ENCODE measurements at regions of chr19 and their contacts with region 1.

Region 1: GRCh38 chr19:18112989-18113478 is 15.5 kb downstream of the MAST3 start:
- DNase-seq: no peak
- H3K4me3 ChIP-seq: no peak overlapping the region
- H3K27ac ChIP-seq: no peak overlapping the region
- H3K27me3 ChIP-seq: peaks cover 3% of the 10 kb centered on the region
- CTCF ChIP-seq: peak; percentile 96

Region 2: DNA sequence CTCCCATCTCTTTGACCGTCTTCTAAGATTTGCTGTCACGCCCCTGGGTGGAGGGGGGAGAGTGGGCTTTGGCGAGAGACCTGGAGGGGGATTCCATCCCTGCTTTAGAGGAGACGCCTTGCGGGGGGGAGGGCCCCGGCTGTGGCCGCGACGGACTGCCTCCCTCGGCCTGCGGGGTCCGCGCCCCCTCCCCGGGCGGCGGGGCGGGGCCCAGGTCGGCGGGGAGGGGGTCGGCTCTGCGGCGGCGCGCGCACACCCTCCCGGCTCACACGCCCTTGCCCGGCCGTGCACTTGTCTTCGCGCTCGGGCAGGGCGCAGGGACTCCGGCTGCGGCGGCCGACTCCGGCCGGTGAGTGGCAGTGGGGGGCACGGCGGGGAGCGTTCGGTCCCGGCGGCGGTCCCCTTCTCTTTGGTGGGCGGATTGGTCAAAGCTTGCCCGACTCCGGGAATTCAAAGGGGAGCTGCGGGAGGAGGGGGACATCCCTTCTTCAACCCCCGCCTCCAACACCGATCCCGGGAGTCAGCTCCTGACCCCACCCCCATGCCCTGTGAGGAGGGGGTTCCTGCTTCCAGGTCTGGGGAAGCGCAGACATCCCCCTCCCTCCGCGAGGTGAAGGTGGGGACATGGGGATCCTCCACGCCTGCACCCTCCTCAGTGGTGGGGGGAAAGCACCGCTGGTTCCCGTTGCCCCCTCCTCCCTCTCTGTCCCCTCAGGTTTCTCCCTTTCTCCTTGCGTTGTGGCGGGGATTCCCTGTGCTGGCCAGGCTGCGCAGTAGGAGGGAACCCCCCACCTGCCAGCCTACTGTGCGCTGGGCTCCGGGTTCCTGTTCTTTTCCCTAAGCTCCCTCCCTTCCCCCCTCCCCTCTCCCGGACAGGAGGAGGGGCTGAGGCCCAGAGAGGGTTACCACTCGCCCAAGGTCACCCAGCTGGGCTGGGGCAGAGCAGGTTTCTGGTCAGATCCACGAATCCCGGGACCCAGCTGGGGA is 160.8 kb before region 1 on chr19:
- CTCF ChIA-PET with region 1: no interaction called
- POLR2A ChIA-PET with region 1: no interaction called
- DNase-seq: no peak
- H3K4me3 ChIP-seq: no peak overlapping the region
- H3K27ac ChIP-seq: no peak overlapping the region
- H3K27me3 ChIP-seq: peaks cover 58% of the 10 kb centered on the region
- CTCF ChIP-seq: no peak

Region 3: GRCh38 chr19:18007044-18007916 is 105.8 kb before region 1 on chr19:
- CTCF ChIA-PET with region 1: interaction called, 10 read pairs
- POLR2A ChIA-PET with region 1: no interaction called
- DNase-seq: no peak
- H3K4me3 ChIP-seq: peak overlapping the region; percentile 58
- H3K27ac ChIP-seq: peak overlapping the region; percentile 21
- H3K27me3 ChIP-seq: no peaks in the 10 kb centered on the region
- CTCF ChIP-seq: peak; percentile 97

Region 4: DNA sequence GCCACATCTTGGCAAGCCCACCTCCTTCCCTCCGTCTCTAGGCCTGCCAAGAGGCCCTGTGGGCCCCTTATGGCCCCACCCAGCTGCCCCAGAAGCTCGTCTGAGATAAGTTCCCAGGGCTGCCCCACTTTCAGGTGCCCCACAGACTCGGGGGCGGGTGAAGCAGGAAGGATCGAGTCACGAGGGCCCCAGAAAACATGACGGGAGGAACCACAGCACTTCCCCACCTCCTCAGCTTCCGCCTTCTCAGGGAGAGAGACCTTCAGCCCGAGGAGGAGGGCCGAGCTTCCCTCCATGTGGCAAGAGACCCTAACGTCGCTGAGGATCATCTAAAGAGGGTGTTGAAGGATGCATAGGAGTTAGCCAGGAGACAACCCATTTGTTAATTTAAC is 21.8 kb before region 1 on chr19:
- CTCF ChIA-PET with region 1: interaction called, 8 read pairs
- POLR2A ChIA-PET with region 1: interaction called, 10 read pairs
- DNase-seq: no peak
- H3K4me3 ChIP-seq: no peak overlapping the region
- H3K27ac ChIP-seq: no peak overlapping the region
- H3K27me3 ChIP-seq: no peaks in the 10 kb centered on the region
- CTCF ChIP-seq: no peak

Region 5: DNA sequence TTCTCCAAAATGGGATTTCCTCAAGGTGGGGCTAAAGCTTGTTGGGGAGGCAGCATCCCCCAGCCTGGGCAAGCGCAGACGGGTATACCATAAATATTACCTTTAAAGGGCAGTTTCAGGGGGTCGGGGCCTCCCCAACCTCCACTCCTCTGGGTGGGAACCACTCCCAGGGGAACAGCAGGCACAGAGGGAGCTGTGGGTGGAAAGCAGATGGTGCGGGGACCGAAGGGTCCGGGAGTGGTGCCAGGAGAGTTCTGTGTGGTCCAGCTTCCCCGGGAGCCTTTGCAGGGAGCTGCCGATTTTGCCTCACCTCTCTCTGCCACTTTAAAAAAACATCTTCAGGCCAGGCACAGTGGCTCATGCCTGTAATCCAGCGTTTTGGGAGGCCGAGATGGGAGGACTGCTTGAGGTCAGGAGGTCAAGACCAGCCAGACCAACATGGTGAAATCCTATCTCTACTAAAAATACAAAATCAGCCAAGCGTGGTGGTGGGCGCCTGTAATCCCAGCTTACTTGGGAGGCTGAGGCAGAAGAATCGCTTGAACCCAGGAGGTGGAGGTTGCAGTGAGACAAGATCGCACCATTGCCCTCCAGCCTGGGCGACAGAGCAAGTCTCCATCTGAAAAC is 10.0 kb before region 1 on chr19:
- CTCF ChIA-PET with region 1: interaction called, 20 read pairs
- POLR2A ChIA-PET with region 1: no interaction called
- DNase-seq: no peak
- H3K4me3 ChIP-seq: no peak overlapping the region
- H3K27ac ChIP-seq: no peak overlapping the region
- H3K27me3 ChIP-seq: peaks cover 21% of the 10 kb centered on the region
- CTCF ChIP-seq: no peak

Region 6: GRCh38 chr19:18152444-18152816 is 39.4 kb after region 1 on chr19:
- CTCF ChIA-PET with region 1: interaction called, 13 read pairs
- POLR2A ChIA-PET with region 1: no interaction called
- DNase-seq: peak; percentile 95
- H3K4me3 ChIP-seq: peak overlapping the region; percentile 69
- H3K27ac ChIP-seq: peak overlapping the region; percentile 94
- H3K27me3 ChIP-seq: no peaks in the 10 kb centered on the region
- CTCF ChIP-seq: peak; percentile 69

Region 7: DNA sequence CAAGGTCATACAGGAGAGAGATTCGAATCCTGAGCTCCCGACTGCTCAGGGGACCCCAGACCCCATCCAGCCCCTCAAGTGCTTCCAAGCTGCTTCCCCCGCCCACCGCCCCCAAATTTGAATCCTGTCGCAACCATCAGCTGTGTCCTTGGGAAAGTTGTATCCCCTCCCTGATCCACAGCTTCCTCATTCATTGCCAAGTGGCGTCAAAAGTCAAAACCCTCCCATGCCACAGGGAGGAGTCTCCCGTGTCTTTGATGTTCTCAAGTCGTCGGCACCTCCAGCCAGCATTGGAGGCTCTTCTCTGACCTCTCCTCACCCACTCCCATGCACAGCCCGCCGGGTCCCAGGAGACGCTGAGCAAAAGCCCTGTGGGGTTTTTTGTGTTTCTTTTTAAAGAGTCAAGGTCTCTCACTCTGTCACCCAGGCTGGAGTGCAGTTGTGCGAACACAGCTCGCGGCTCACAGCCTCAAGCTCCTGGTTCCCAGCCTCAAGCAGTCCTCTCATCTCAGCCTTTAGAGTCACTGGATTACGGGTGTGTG is 57.8 kb after region 1 on chr19:
- CTCF ChIA-PET with region 1: interaction called, 10 read pairs
- POLR2A ChIA-PET with region 1: no interaction called
- DNase-seq: no peak
- H3K4me3 ChIP-seq: no peak overlapping the region
- H3K27ac ChIP-seq: no peak overlapping the region
- H3K27me3 ChIP-seq: peaks cover 2% of the 10 kb centered on the region
- CTCF ChIP-seq: no peak

Region 8: GRCh38 chr19:18271433-18271841 is 158.4 kb after region 1 on chr19:
- CTCF ChIA-PET with region 1: no interaction called
- POLR2A ChIA-PET with region 1: no interaction called
- DNase-seq: no peak
- H3K4me3 ChIP-seq: no peak overlapping the region
- H3K27ac ChIP-seq: peak overlapping the region; percentile 11
- H3K27me3 ChIP-seq: no peaks in the 10 kb centered on the region
- CTCF ChIP-seq: no peak